Activated T-helper 2 cell treated with anti-CD3 and anti-CD28 coated beads, Interferon-gamma antibody, Interleukin-2, Interleukin-4, amounts not matched to agents 10 μg/mL and 5 μg/mL and 100 μg/mL, durations not matched to agents 14 hours and 24 hours and 36 hours (primary cell): ENCODE measurements at regions of chr1 and their contacts with region 1.

Region 1: GRCh38 chr1:26169669-26170471 is at the start of gene ZNF593:
- DNase-seq: peak; percentile 87
- H3K4me3 Mint-ChIP-seq: peak within 1 kb of the TSS; percentile 92
- H3K27ac Mint-ChIP-seq: peak within 1 kb of the TSS; percentile 88
- H3K4me1 Mint-ChIP-seq: peaks cover 25% of the 10 kb centered on the region
- H3K27me3 Mint-ChIP-seq: peaks cover 8% of the 10 kb centered on the region
- total RNA-seq, gene ZNF593: 57.5 and 65.0 TPM in 2 replicates

Region 2: DNA sequence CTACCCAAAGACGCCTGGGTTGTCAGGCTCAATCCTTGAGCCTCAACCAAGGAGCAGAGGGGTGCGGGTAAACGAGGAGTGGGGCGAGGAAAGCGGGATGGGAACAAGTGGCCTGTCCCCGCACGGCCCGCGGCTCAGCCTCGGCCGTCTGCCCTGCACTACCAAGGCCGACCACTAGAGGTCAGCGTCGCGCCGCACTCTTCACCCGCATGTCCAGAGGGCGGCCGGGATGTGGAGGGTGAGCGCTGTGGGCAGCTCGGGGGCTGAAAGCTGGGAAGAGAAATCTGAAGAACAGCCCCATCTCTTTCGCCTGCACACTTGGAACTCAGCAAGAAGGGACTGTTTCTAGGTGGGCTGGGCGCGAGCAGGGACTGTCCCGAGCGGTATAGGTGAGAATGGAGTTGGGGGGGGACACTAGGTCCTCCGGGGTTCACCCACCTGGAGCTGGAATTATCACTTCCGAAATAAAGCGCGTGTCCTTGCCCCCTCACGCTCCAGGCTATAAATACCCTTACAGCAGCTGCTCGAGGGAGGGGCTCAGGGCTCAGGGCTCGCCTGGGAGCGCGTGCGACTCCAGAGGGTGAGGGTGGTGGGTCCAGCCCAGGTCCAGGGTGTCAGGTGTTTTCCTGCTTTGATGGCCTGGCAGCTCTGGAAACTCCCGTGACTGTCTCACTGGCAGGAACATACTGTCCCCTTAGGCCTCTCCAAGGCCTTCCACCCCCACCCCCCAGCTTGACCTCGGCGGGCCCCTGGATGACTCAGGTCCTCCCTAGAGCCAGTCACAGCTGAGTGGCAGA is 133.7 kb before region 1 on chr1:
- intact Hi-C with region 1: loop called (anchors 2 kb)
- DNase-seq: peak; percentile 74
- H3K4me3 Mint-ChIP-seq: peak overlapping the region; percentile 94
- H3K27ac Mint-ChIP-seq: no peak overlapping the region
- H3K4me1 Mint-ChIP-seq: peaks cover 10% of the 10 kb centered on the region
- H3K27me3 Mint-ChIP-seq: peaks cover 25% of the 10 kb centered on the region

Region 3: DNA sequence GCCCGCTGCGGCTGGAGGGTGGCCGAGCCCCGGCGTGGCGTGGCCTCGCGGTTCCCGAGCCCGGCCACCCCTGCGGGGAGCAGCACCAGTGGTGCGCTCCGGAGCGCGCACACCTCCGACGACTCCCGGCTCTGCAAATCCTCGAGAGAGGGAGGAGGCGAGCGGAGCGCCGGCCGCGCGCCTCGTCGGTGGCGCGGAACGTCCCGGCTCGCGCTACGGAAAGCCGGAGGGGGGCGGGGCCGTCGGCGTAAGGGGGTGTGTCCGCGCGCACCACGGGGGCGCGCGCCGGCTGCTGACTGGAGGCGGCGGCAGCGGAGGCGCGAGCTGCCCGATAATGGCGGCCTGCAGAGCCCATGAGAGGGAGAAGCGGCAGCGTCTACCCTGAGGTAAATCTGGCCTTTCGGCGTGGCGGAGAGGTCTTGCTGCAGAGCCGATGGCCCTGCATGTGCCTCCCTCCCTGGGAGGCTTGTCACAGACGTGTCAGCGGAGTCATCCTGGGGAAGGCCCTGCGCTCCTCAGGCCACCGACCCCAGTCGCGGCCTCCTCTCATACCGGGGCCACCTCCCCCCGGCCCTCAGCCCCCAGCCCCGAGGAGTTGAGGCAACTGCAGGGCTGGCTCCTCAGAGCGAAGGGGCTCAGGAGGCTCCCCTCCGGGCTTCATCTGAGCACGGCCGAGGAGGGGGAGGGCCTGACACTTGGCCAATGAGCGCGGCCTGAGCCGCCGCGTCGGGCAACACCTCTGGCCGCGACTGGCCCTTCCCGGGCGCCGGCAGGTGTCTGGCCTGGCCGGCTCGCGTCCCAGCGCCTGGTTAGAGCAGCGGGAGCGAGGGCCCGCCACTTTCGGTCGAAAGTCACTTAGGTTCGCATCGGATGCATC is 58.1 kb before region 1 on chr1 and contains the start of gene PDIK1L:
- intact Hi-C with region 1: loop called (anchors 2 kb)
- DNase-seq: peak; percentile 90
- H3K4me3 Mint-ChIP-seq: peak within 1 kb of the TSS; percentile 96
- H3K27ac Mint-ChIP-seq: peak within 1 kb of the TSS; percentile 92
- H3K4me1 Mint-ChIP-seq: peaks cover 29% of the 10 kb centered on the region
- H3K27me3 Mint-ChIP-seq: no peaks in the 10 kb centered on the region
- total RNA-seq, gene PDIK1L: 15.2 and 17.2 TPM in 2 replicates

Region 4: DNA sequence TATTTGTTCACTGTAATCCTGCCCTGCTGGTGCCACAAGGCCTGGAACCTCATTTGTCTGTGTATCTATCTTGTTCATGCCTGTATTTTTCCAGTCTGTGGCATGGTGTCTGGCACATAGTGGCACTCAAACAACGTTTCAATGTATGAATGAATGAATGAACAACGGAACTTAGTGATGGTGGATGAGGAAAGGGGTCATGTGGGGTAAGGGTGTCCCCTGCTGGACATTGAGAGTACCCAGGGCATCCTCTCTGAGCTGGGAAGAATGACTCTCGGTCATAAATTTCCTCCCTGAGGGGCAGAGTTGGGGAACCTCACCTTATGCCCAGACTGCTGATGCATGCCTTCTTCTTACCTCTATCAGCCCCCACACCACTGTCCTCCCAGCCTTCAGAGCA is 221.6 kb after region 1 on chr1:
- intact Hi-C with region 1: loop called (anchors 10 kb)
- DNase-seq: peak; percentile 31
- H3K4me3 Mint-ChIP-seq: no peak overlapping the region
- H3K27ac Mint-ChIP-seq: no peak overlapping the region
- H3K4me1 Mint-ChIP-seq: peaks cover 28% of the 10 kb centered on the region
- H3K27me3 Mint-ChIP-seq: peaks cover 9% of the 10 kb centered on the region

Region 5: DNA sequence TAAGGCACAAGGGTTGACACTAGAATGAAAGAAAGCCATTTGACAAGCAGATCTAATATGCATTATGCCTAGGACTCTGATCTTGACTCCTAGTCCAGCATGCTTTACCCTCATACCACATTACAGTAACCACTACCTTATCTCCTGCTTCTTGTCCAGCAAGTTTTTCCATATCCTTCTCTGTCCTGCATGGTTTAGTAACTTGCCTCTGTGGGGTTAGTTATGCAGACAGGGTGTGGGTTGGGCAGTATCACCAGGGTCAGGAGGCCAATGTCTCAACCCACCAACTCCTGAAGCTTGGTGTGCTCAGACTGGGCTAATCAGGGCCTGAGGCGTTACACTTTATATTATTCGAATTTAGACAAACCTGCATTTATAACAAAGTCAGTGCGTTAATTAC is 281.0 kb after region 1 on chr1:
- intact Hi-C with region 1: no loop called
- DNase-seq: no peak
- H3K4me3 Mint-ChIP-seq: no peak overlapping the region
- H3K27ac Mint-ChIP-seq: no peak overlapping the region
- H3K4me1 Mint-ChIP-seq: no peaks in the 10 kb centered on the region
- H3K27me3 Mint-ChIP-seq: no peaks in the 10 kb centered on the region